Activated CD4-positive, alpha-beta memory T cell treated with anti-CD3 and anti-CD28 coated beads, Interleukin-2, amount 10 ng/mL, durations not matched to agents 7 days and 5 days (primary cell): ENCODE measurements at regions of chr2 and their contacts with region 1.

Region 1: DNA sequence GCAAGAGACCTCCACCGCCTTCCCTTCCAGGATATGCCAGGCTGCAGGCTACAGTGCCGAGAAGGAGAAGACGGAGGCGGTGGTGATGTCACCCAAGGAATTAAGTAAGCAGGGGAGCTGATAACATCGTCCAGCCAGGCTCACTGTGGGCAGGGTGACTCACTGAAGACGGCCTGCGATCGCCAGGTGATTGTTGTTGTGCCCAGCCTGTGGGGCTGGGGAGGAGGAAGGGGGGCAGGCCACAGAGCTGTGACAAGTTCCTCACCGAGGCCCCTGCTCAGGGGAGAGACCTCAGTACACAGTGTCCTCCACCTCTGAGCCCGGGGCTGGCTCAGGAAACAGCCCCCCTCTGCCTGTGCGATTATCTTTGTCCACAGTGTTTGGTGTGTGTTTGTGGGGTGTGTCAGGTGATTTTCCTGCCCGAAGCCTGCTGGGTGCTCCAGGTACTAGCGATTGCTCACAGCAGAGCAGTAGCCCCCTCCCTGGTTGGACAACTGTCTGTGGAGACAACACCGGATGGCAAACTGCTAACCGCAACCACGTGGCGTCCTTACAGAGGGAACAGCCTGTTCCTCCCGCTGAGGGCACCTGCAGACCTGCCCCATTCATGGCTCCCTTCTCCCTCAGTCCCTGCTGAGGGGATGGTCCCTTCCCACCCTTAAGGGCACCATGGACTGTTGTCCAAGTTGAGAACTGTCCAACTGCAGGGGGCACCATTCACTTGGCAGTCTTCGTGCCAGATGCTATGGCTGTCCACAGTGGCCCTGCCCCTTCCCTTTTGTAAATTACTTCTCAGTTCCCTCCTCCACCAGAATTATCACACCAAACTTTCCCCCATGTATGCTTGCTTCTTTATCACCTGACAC is 95.1 kb downstream of the ZFP36L2 start:
- DNase-seq: peak; percentile 92
- H3K4me3 Mint-ChIP-seq: peak overlapping the region; percentile 48
- H3K27ac Mint-ChIP-seq: peak overlapping the region; percentile 99
- H3K4me1 Mint-ChIP-seq: peaks cover 92% of the 10 kb centered on the region
- H3K27me3 Mint-ChIP-seq: peaks cover under 1% of the 10 kb centered on the region

Region 2: GRCh38 chr2:43149482-43150107 is 18.3 kb after region 1 on chr2:
- CTCF ChIA-PET with region 1: interaction called, 5 read pairs
- POLR2A ChIA-PET with region 1: interaction called, 42 read pairs
- DNase-seq: peak; percentile 64
- H3K4me3 Mint-ChIP-seq: peak overlapping the region; percentile 30
- H3K27ac Mint-ChIP-seq: peak overlapping the region; percentile 61
- H3K4me1 Mint-ChIP-seq: peaks cover 48% of the 10 kb centered on the region
- H3K27me3 Mint-ChIP-seq: no peaks in the 10 kb centered on the region

Region 3: DNA sequence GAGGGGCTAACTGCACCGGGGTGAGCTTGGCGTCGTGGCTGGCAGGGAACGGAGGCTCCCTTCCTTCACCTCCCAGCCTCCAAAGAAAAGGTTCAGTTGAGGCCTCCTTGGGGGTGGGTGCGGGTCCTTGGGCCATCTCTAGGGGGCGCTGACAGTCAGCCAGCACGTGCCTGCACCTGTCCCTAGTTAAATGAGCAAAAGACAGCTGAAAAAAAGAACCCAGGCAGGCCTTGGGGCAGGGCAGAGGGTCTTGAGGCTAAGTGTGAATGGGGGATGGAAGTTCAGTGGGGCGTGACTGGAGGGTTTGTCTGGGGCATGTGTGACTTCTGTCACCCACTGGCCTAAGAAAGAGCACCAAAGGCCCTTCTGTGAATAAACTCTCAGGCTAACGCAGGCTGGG is 38.7 kb after region 1 on chr2:
- CTCF ChIA-PET with region 1: interaction called, 12 read pairs
- POLR2A ChIA-PET with region 1: interaction called, 154 read pairs
- DNase-seq: peak; percentile 77
- H3K4me3 Mint-ChIP-seq: no peak overlapping the region
- H3K27ac Mint-ChIP-seq: peak overlapping the region; percentile 94
- H3K4me1 Mint-ChIP-seq: peaks cover 68% of the 10 kb centered on the region
- H3K27me3 Mint-ChIP-seq: no peaks in the 10 kb centered on the region

Region 4: DNA sequence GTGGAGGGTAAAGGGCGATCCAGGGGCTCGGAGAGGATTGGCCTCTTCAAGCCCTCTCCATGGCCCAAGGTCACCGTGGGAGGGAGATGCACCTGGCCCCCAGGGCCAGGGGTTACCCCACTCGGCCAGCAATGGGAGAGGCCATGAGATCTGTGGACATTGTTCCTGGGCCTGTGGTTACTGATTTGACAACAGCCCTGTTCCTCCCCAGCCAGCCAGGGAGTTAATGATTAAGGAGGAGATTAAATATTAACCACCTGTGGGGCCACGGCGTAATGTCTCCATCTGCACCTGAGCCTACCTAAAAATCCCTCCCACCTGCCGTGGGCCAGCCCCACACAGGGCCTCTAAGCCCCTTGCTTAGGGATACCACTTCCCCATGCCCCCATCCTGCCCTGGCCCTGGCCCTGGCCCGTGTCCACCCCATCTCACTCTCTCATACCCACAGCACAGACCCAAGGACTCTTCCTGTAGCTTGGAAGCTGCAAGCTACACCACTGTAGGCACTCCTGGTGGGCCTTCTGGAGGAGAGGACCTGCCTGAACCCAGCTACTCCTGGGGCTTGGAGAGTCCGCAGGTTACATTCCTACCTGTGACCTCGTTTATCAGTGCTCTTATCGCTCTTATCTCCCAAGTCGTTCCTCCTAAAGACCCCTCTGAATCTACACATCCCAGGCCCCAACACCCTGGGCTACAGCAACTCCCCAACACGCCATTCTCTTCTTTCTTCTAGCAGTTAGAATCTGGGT is 63.0 kb after region 1 on chr2:
- CTCF ChIA-PET with region 1: interaction called, 8 read pairs
- POLR2A ChIA-PET with region 1: interaction called, 24 read pairs
- DNase-seq: no peak
- H3K4me3 Mint-ChIP-seq: peak overlapping the region; percentile 72
- H3K27ac Mint-ChIP-seq: peak overlapping the region; percentile 94
- H3K4me1 Mint-ChIP-seq: peaks cover 54% of the 10 kb centered on the region
- H3K27me3 Mint-ChIP-seq: no peaks in the 10 kb centered on the region

Region 5: GRCh38 chr2:43484323-43484930 is 353.2 kb after region 1 on chr2:
- CTCF ChIA-PET with region 1: interaction called, 54 read pairs
- POLR2A ChIA-PET with region 1: interaction called, 5 read pairs
- DNase-seq: no peak
- H3K4me3 Mint-ChIP-seq: no peak overlapping the region
- H3K27ac Mint-ChIP-seq: no peak overlapping the region
- H3K4me1 Mint-ChIP-seq: peaks cover 45% of the 10 kb centered on the region
- H3K27me3 Mint-ChIP-seq: no peaks in the 10 kb centered on the region